Adrenal gland (tissue), 19 donors: ENCODE measurements at regions of chr6 and their contacts with region 1.

Region 1: GRCh38 chr6:117976030-117976651 is 69.1 kb downstream of the SLC35F1 start:
- DNase-seq: peak in 4 of 7 donors; percentile 10 to 21 (median 17)
- H3K4me3 ChIP-seq: no peak overlapping the region
- H3K27ac ChIP-seq: no peak overlapping the region
- H3K4me1 ChIP-seq: no peaks in the 10 kb centered on the region
- H3K27me3 ChIP-seq: no peaks in the 10 kb centered on the region
- CTCF ChIP-seq: peak; percentile 35 to 70 (median 56)
- POLR2A ChIP-seq: no peak

Region 2: GRCh38 chr6:118252474-118252873 is 276.3 kb after region 1 on chr6:
- intact Hi-C with region 1: loop called in 1 of 2 experiments (anchors 10 kb)
- DNase-seq: no peak
- H3K4me3 ChIP-seq: no peak overlapping the region
- H3K27ac ChIP-seq: no peak overlapping the region
- H3K4me1 ChIP-seq: no peaks in the 10 kb centered on the region
- H3K27me3 ChIP-seq: peaks cover 4% of the 10 kb centered on the region
- CTCF ChIP-seq: no peak
- POLR2A ChIP-seq: no peak

Region 3: DNA sequence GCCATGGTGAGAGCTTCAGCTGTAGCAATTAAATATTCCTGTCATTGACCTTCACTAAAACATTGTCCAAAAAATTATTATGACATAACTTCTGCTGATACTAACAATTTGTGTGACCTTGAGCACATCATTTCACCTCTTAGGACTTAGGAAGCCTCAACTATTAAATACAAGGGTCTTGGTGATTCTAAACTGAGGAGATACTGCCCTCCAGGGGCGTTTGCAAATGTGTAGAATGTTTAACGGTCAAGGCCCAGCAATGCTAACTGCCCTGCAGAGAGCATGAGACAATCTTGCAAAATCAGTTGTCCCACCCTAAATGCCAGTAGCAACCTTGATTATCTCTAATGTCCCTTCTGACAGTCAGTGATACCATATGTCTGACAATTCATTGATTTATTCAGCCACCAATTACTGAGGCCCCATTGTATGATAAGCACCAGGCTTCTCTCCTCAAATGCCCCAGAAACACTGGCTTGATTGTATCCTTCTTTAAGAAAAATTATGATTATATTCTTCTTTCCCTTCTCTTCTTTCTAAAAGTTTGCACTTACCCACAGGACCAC is 287.9 kb after region 1 on chr6:
- intact Hi-C with region 1: loop called (anchors 5 to 10 kb)
- DNase-seq: peak; percentile 26 to 62 (median 34)
- H3K4me3 ChIP-seq: no peak overlapping the region
- H3K27ac ChIP-seq: no peak overlapping the region
- H3K4me1 ChIP-seq: no peaks in the 10 kb centered on the region
- H3K27me3 ChIP-seq: no peaks in the 10 kb centered on the region
- CTCF ChIP-seq: peak; percentile 20 to 67 (median 57)
- POLR2A ChIP-seq: no peak